ENCODE measurements at regions of chr20 and their contacts with region 1.

Region 1: GRCh38 chr20:44683263-44684046 is 31.7 kb upstream of the CCN5 start:
- DNase-seq: no peak
- H3K4me3 ChIP-seq: no peak overlapping the region
- H3K27me3 ChIP-seq: no peaks in the 10 kb centered on the region
- CTCF ChIP-seq: peak; percentile 79

Region 2: GRCh38 chr20:44720617-44720993 is 37.1 kb after region 1 on chr20:
- CTCF ChIA-PET with region 1: interaction called, 19 read pairs
- POLR2A ChIA-PET with region 1: no interaction called
- DNase-seq: peak; percentile 35
- H3K4me3 ChIP-seq: no peak overlapping the region
- H3K27me3 ChIP-seq: no peaks in the 10 kb centered on the region
- CTCF ChIP-seq: no peak

Region 3: GRCh38 chr20:44733341-44734069 is 50.0 kb after region 1 on chr20:
- CTCF ChIA-PET with region 1: interaction called, 269 read pairs
- POLR2A ChIA-PET with region 1: no interaction called
- DNase-seq: no peak
- H3K4me3 ChIP-seq: no peak overlapping the region
- H3K27me3 ChIP-seq: no peaks in the 10 kb centered on the region
- CTCF ChIP-seq: peak; percentile 88

Region 4: GRCh38 chr20:44738813-44739477 is 55.5 kb after region 1 on chr20:
- CTCF ChIA-PET with region 1: interaction called, 269 read pairs
- POLR2A ChIA-PET with region 1: no interaction called
- DNase-seq: no peak
- H3K4me3 ChIP-seq: no peak overlapping the region
- H3K27me3 ChIP-seq: peaks cover 6% of the 10 kb centered on the region
- CTCF ChIP-seq: no peak

Region 5: GRCh38 chr20:44866703-44867335 is 183.4 kb after region 1 on chr20:
- CTCF ChIA-PET with region 1: interaction called, 15 read pairs
- POLR2A ChIA-PET with region 1: no interaction called
- DNase-seq: no peak
- H3K4me3 ChIP-seq: no peak overlapping the region
- H3K27me3 ChIP-seq: peaks cover 7% of the 10 kb centered on the region
- CTCF ChIP-seq: no peak